ENCODE measurements at regions of chr15 and their contacts with region 1.

Region 1: GRCh38 chr15:64800476-64800875 is 25.0 kb downstream of the PIF1 start:
- DNase-seq: no peak
- ATAC-seq: no peak
- H3K4me3 ChIP-seq: no peak overlapping the region
- H3K4me1 ChIP-seq: no peaks in the 10 kb centered on the region
- CTCF ChIP-seq: no peak

Region 2: DNA sequence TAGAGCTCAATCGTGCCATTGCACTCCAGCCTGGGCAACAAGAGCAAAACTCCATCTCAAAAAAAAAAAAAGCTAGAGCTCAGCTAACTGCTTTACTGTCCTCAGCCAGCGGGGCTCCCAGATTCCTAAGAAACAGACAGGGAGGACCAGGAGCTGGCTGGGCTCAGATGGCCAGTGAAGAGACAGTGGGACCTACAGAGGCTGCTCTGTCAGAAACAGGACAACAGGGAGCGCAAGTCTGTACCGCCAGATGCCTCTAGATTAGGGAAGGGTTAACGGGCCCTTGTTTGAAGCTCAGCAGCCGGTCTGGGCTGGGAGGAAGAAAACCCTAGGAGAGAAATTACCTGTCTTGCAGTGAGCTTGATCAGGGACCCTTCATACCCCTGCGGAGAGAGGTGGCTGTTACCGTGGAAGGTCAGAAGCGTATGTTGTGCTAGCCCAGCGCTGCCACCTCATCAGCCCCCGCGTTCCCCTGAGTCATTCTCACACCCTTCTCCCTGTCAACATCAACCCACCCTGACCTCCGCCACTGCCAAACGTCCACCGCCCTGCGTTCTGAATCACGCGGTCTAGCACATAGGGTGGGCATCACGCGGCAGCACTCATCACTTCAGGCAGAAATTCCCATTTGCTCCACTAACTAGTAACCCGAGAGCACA is 50.3 kb before region 1 on chr15:
- intact Hi-C with region 1: loop called in 1 of 2 experiments (anchors 5 kb)
- DNase-seq: no peak
- ATAC-seq: no peak
- H3K4me3 ChIP-seq: no peak overlapping the region
- H3K4me1 ChIP-seq: no peaks in the 10 kb centered on the region
- CTCF ChIP-seq: no peak